ENCODE measurements at regions of chr3 and their contacts with region 1.

Region 1: GRCh38 chr3:98746882-98747281 is 16.3 kb upstream of the ST3GAL6 start:
- DNase-seq: peak; percentile 86
- H3K4me3 ChIP-seq: no peak overlapping the region
- H3K27ac ChIP-seq: peak overlapping the region; percentile 44
- H3K4me1 ChIP-seq: peaks cover 14% of the 10 kb centered on the region
- H3K27me3 ChIP-seq: no peaks in the 10 kb centered on the region
- CTCF ChIP-seq: no peak
- POLR2A ChIP-seq: no peak

Region 2: GRCh38 chr3:98763076-98763475 is 16.2 kb after region 1 on chr3 and contains the start of gene ST3GAL6:
- CTCF ChIA-PET with region 1: interaction called, 4 read pairs
- POLR2A ChIA-PET with region 1: no interaction called
- dilution Hi-C with region 1: no loop called
- intact Hi-C with region 1: loop called (anchors 2 kb)
- DNase-seq: peak; percentile 85
- H3K4me3 ChIP-seq: peak within 1 kb of the TSS in 1 of 3 experiments; percentile 9
- H3K27ac ChIP-seq: peak within 1 kb of the TSS; percentile 66
- H3K4me1 ChIP-seq: peaks cover 66% of the 10 kb centered on the region
- H3K27me3 ChIP-seq: no peaks in the 10 kb centered on the region
- CTCF ChIP-seq: no peak
- POLR2A ChIP-seq: no peak
- total RNA-seq, gene ST3GAL6: 17.7 and 35.9 TPM in 2 replicates